Prostate gland (tissue), 2 donors: ENCODE measurements at regions of chr2 and their contacts with region 1.

Region 1: DNA sequence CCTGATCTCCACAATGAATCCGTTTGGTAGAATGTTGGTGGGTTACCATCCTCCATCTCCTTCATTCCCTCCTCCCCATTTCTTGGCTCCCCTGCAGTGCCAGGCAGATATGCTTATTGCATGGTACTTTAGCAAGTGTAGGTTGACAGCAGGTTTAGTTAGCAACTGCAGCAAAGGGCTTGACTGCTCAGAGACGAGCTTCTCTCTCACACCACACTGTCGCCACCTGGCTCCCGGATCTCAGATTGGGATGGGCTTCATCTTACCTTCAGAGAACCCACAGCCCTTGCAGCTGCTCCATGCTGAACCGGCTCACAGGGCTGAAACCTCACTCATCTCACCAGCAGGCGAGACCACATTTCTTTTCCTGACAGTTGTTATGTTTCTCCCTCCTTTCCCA is 88.8 kb downstream of the VWA3B start:
- DNase-seq: peak; percentile 20
- H3K4me3 ChIP-seq: no peak overlapping the region
- H3K27ac ChIP-seq: no peak overlapping the region
- H3K4me1 ChIP-seq: no peaks in the 10 kb centered on the region
- H3K27me3 ChIP-seq: peaks cover 2% of the 10 kb centered on the region
- CTCF ChIP-seq: peak in 2 of 4 experiments; percentile 20 to 30
- POLR2A ChIP-seq: no peak

Region 2: DNA sequence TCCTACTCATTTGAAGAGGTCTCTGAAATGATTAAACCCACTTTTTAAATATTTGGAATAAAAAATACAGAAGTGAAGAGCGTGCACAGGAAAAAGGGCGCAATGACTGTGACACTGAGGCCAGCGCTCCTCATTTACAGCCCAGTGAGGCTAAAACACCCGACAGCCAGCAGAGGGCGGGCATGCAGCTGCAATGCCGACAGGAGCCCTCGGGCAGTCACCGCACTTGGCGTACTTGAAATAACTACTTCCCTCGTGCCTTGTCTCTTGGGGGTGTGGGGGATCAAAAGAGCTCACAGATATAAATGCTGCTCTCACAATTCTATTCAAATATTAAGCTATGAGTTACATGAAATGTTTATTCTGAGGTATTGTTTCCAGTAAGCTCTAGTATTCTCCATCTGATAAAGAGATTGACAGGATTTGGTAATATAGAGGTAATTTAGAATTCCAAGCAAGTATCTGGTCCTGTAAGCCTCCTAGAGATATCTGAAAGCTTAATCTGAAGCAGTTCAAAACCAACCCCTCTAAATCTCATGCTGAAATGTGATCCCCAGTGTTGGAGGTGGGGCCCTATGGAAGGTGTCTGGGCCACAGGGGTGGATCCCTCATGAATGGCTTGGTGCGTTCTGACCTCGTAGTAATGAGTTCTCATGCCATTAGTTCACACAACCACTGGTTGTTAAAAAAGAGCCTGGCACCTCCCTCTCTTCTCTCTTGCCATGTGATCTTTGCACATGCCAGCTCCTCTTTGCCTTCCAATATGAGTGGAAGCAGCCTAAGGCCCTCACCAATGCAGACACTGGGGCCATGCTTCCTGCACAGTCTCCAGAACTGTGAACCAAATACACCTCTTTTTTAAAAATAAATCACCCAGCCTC is 368.8 kb before region 1 on chr2:
- intact Hi-C with region 1: loop called (anchors 10 kb)
- DNase-seq: peak; percentile 80
- H3K4me3 ChIP-seq: no peak overlapping the region
- H3K27ac ChIP-seq: no peak overlapping the region
- H3K4me1 ChIP-seq: no peaks in the 10 kb centered on the region
- H3K27me3 ChIP-seq: no peaks in the 10 kb centered on the region
- CTCF ChIP-seq: peak; percentile 85 to 94 (median 90)
- POLR2A ChIP-seq: no peak

Region 3: GRCh38 chr2:98012561-98012991 is 163.2 kb before region 1 on chr2:
- intact Hi-C with region 1: loop called (anchors 10 kb)
- DNase-seq: no peak
- H3K4me3 ChIP-seq: no peak overlapping the region
- H3K27ac ChIP-seq: no peak overlapping the region
- H3K4me1 ChIP-seq: no peaks in the 10 kb centered on the region
- H3K27me3 ChIP-seq: no peaks in the 10 kb centered on the region
- CTCF ChIP-seq: no peak
- POLR2A ChIP-seq: no peak